Gastrocnemius medialis (tissue), 4 donors: ENCODE measurements at regions of chr9 and their contacts with region 1.

Region 1: DNA sequence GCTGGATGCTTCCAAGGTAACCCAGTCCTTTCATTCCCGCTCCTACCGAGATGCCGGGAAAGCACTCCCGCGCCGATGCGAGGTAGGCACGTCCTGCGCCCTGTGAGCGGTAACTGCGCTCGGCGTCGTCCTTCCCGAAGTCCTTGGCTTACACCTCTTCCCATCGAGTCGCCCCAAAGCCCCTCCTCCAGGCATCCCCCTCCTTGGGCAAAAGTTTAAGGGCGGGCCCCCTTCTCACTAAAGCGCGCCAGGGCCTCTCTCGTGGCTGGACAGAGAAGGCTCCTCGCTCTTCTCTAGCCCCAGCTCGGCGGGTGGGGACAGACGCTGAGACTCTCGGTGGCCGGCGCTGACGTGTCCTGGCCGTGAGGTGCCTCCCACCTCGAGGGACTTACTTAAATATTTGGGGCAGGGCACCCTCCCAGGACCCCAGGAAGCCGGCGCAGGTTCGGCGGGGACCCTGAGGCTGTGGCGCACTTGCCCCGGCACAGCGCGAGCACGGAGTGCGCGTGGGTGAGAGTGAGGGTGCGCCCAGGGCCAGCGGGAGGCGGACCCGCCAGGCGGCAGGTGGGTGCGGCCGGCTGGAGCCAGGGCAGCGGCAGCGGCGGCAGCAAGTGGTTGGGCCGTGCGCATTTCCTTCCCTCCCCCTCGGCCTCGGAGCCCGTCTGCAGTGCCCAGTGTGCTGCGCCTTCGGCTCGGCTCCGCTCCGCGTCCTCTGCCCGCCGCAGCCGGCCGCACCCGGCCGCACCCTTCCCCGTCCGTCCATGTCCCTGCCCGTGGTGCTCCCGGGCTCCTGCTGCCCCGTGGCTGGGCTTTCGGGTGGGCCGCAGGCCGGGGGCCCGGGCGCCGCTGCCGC is at the start of gene ENTREP1:
- DNase-seq: peak; percentile 70 to 79
- ATAC-seq: peak; percentile 80 to 82
- H3K4me3 ChIP-seq: peak within 1 kb of the TSS; percentile 64 to 81 (median 79)
- H3K27ac ChIP-seq: peak within 1 kb of the TSS; percentile 84 to 98 (median 96)
- H3K4me1 ChIP-seq: peaks cover 33 to 35% of the 10 kb centered on the region in 2 donors
- H3K27me3 ChIP-seq: no peaks in the 10 kb centered on the region
- CTCF ChIP-seq: peak; percentile 16 to 43 (median 29)
- POLR2A ChIP-seq: peak; percentile 78 to 82
- total RNA-seq, gene ENTREP1: 10.8 to 26.8 (median 17.1) TPM

Region 2: GRCh38 chr9:68515326-68515901 is 809.4 kb before region 1 on chr9:
- in situ Hi-C with region 1: no loop called
- intact Hi-C with region 1: loop called (anchors 10 kb)
- DNase-seq: peak; percentile 62 to 77
- ATAC-seq: peak; percentile 99 to 100
- H3K4me3 ChIP-seq: no peak overlapping the region
- H3K27ac ChIP-seq: peak overlapping the region; percentile 79 to 88 (median 85)
- H3K4me1 ChIP-seq: peaks cover 17 to 20% of the 10 kb centered on the region in 2 donors
- H3K27me3 ChIP-seq: no peaks in the 10 kb centered on the region
- CTCF ChIP-seq: no peak
- POLR2A ChIP-seq: peak in 1 of 2 donors; percentile 69

Region 3: GRCh38 chr9:69223605-69224004 is 101.2 kb before region 1 on chr9:
- in situ Hi-C with region 1: loop called in 1 of 4 experiments (anchors 25 kb)
- intact Hi-C with region 1: no loop called
- DNase-seq: peak in 1 of 2 donors; percentile 22
- ATAC-seq: peak; percentile 62 to 95
- H3K4me3 ChIP-seq: no peak overlapping the region
- H3K27ac ChIP-seq: no peak overlapping the region
- H3K4me1 ChIP-seq: no peaks in the 10 kb centered on the region
- H3K27me3 ChIP-seq: no peaks in the 10 kb centered on the region
- CTCF ChIP-seq: peak; percentile 39 to 69 (median 50)
- POLR2A ChIP-seq: no peak

Region 4: GRCh38 chr9:69376651-69377050 is 51.9 kb after region 1 on chr9:
- in situ Hi-C with region 1: loop called in 1 of 4 experiments (anchors 10 kb)
- intact Hi-C with region 1: loop called (anchors 2 kb)
- DNase-seq: peak; percentile 42 to 48
- ATAC-seq: peak; percentile 14 to 16
- H3K4me3 ChIP-seq: no peak overlapping the region
- H3K27ac ChIP-seq: peak overlapping the region; percentile 90 to 98 (median 96)
- H3K4me1 ChIP-seq: peaks cover 51 to 56% of the 10 kb centered on the region in 2 donors
- H3K27me3 ChIP-seq: no peaks in the 10 kb centered on the region
- CTCF ChIP-seq: no peak
- POLR2A ChIP-seq: peak in 1 of 2 donors; percentile 31

Region 5: DNA sequence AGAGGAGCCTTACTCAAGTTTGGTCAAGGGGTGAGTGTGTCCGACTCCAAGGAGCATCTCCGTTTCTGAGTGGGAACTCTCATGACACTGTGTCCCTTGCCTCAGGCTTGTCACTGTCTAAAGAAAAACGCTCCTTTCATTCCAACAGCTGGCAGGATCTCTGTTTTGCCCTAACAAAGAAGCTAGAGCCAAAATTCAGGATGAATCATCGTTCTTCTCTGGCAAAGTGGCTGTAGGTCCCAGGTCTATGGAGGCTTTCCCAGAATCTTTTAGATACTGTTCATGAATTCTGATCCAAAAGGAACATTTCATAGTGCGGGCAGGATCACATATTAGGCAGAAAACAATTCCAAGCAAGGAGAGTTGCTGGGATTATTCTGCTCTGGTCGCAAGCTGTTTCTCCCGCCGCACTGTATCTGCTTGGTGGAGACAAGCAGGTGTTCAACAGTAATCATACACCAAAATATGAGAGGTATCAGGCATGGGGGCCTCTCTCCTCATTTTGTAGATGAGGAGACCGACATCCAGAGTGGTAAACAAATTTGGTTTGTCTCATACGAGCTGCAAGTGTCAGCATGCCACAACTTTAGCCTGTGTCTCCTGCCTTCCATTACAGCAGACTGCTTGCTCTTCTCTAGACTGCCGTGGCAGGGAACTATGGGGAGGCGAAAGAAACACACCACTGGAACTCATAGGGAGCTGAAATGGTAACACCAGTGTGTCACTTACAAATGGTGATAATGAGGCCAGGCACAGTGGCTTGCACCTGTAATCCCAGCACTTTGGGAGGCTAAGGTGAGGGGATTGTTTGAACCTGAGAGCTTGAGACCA is 72.8 kb after region 1 on chr9:
- in situ Hi-C with region 1: loop called in 1 of 4 experiments (anchors 10 kb)
- intact Hi-C with region 1: loop called (anchors 2 kb)
- DNase-seq: peak; percentile 76 to 78
- ATAC-seq: peak; percentile 93 to 95
- H3K4me3 ChIP-seq: peak overlapping the region; percentile 29 to 42 (median 38)
- H3K27ac ChIP-seq: peak overlapping the region; percentile 80 to 97 (median 88)
- H3K4me1 ChIP-seq: peaks cover 6 to 21% of the 10 kb centered on the region in 2 donors
- H3K27me3 ChIP-seq: no peaks in the 10 kb centered on the region
- CTCF ChIP-seq: no peak
- POLR2A ChIP-seq: no peak